CD4-positive, alpha-beta memory T cell (primary cell): ENCODE measurements at regions of chr1 and their contacts with region 1.

Region 1: GRCh38 chr1:234842726-234843641 is 233.0 kb upstream of the IRF2BP2 start:
- DNase-seq: peak; percentile 34 to 76 (median 44)
- H3K4me3 ChIP-seq: peak overlapping the region in 1 of 2 donors; percentile 28
- H3K4me3 Mint-ChIP-seq: peak overlapping the region; percentile 33 to 83 (median 58)
- H3K27ac ChIP-seq: peak overlapping the region; percentile 39
- H3K27ac Mint-ChIP-seq: peak overlapping the region; percentile 76 to 91 (median 83)
- H3K4me1 ChIP-seq: peaks cover 65% of the 10 kb centered on the region
- H3K4me1 Mint-ChIP-seq: peaks cover 47 to 73% (median 60%) of the 10 kb centered on the region in 4 donors
- H3K27me3 ChIP-seq: no peaks in the 10 kb centered on the region
- H3K27me3 Mint-ChIP-seq: no peaks in the 10 kb centered on the region

Region 2: DNA sequence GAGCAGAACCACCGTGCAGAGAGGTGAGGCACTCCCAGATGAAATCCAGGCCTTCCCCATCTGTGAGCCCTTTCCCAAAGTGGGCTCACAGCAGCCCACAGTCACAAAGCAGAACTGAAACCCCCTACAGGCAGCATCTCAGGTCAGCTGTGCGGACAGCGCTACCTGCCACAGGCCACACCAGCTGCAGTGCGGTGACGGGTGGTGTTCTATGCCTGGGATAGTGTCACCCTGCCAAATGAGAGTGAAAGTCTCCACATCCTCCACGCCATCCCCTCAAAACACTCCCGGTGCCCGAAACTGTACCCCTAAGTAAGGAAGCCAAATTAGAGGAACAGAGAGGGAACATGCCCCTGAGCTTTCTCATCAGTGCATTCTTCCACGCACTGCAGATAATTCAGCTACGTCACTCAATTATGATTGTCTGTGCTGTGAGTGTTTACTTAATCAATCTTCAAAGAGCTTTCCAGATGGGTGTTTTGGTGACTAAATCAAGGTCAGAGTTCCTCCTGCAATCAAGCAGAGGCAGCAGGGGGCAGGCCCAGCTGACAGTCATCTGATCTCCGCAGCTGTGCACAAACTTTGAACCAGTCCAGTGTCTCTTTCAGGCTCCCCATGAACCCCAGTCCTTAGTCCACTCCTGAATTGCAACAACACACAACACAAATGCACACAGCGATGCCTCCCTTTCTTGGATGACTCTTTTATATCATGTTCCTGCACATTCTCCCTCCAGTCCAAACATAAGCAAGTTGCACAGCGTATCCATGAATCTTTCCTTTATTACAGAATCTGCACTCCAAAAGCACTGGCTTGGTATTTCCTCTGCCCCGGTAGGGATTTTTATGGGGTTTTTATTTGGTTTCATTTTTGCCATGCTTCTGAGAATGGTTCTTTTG is 135.7 kb after region 1 on chr1:
- CTCF ChIA-PET with region 1: no interaction called
- POLR2A ChIA-PET with region 1: interaction called, 14 read pairs
- intact Hi-C with region 1: no loop called
- DNase-seq: peak; percentile 72 to 87 (median 77)
- H3K4me3 ChIP-seq: peak overlapping the region in 1 of 2 donors; percentile 33
- H3K4me3 Mint-ChIP-seq: peak overlapping the region; percentile 43 to 93 (median 79)
- H3K27ac ChIP-seq: peak overlapping the region; percentile 88
- H3K27ac Mint-ChIP-seq: peak overlapping the region; percentile 96 to 99 (median 97)
- H3K4me1 ChIP-seq: peaks cover 65% of the 10 kb centered on the region
- H3K4me1 Mint-ChIP-seq: peaks cover 40 to 83% (median 53%) of the 10 kb centered on the region in 4 donors
- H3K27me3 ChIP-seq: no peaks in the 10 kb centered on the region
- H3K27me3 Mint-ChIP-seq: no peaks in the 10 kb centered on the region

Region 3: DNA sequence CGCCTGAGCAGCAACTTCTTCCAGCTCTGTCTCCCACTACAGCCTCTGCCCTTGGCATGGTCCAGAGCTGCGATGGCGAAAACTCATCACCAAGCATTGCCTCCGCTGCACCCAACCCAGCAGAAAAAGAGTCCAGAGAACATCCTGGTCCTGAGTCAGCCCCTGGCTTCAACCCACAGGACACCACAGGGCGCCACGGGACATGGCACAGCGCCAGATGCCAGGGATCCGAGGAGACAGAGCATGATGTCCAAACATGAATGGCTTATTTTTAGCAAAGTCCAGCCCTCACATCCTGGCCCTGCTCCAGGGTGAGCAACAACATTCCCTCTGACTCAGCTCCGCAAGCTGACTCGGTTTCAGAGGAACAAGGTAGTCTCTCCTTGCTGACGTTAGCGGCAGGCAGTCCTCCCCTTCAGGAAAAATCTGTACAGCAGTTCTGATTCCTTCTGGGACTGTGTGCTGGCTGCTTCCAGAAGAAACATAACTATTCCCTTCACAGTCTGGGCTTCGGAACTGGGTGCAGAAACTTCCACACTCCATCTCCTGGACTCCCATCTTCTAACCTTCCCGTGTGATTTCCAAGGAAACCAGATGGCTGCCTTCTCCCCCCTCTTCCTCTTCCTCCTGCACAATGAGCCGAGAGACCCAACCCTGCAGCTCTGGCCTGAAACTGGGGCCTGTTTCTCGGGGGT is 154.4 kb after region 1 on chr1:
- CTCF ChIA-PET with region 1: no interaction called
- POLR2A ChIA-PET with region 1: no interaction called
- intact Hi-C with region 1: no loop called
- DNase-seq: no peak
- H3K4me3 ChIP-seq: no peak overlapping the region
- H3K4me3 Mint-ChIP-seq: peak overlapping the region in 1 of 8 donors; percentile 37
- H3K27ac ChIP-seq: no peak overlapping the region
- H3K27ac Mint-ChIP-seq: no peak overlapping the region
- H3K4me1 ChIP-seq: peaks cover 5% of the 10 kb centered on the region
- H3K4me1 Mint-ChIP-seq: peaks cover 0 to 1% (median under 1%) of the 10 kb centered on the region in 4 donors
- H3K27me3 ChIP-seq: no peaks in the 10 kb centered on the region
- H3K27me3 Mint-ChIP-seq: no peaks in the 10 kb centered on the region

Region 4: GRCh38 chr1:235075188-235075926 is 232.4 kb after region 1 on chr1:
- CTCF ChIA-PET with region 1: no interaction called
- POLR2A ChIA-PET with region 1: interaction called, 4 read pairs
- intact Hi-C with region 1: loop called (anchors 10 kb)
- DNase-seq: peak; percentile 22 to 66 (median 32)
- H3K4me3 ChIP-seq: peak overlapping the region in 1 of 2 donors; percentile 16
- H3K4me3 Mint-ChIP-seq: peak overlapping the region; percentile 75 to 93 (median 82)
- H3K27ac ChIP-seq: peak overlapping the region; percentile 1
- H3K27ac Mint-ChIP-seq: peak overlapping the region; percentile 22 to 93 (median 88)
- H3K4me1 ChIP-seq: peaks cover 25% of the 10 kb centered on the region
- H3K4me1 Mint-ChIP-seq: peaks cover 23 to 32% (median 27%) of the 10 kb centered on the region in 4 donors
- H3K27me3 ChIP-seq: no peaks in the 10 kb centered on the region
- H3K27me3 Mint-ChIP-seq: no peaks in the 10 kb centered on the region